Caco-2 (cell line): ENCODE measurements at regions of chr6 and their contacts with region 1.

Region 1: DNA sequence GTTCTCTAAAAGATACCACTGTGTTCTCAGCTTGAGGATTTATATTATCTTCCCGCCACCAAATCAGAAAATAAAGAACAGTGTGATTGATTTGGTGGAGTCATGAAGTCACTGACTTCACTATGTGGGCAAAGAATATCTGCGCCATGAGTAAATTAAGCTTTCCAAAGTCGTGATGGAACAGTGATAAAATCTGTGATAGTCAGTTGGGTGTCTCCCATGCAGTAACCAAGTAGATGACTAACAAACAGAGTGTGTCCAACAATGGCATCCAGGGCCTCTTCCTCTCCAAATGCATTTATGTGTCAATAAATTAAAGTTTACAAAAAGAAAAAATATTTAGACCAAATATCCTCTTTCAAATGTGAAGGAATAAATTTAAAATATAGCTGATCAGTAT is 87.0 kb upstream of the DST start:
- DNase-seq: no peak
- H3K4me3 ChIP-seq: no peak overlapping the region
- H3K4me3 Mint-ChIP-seq: no peak overlapping the region
- H3K27ac Mint-ChIP-seq: peak overlapping the region; percentile 46
- H3K4me1 ChIP-seq: peaks cover 74% of the 10 kb centered on the region
- H3K4me1 Mint-ChIP-seq: peaks cover 53% of the 10 kb centered on the region
- H3K27me3 ChIP-seq: no peaks in the 10 kb centered on the region
- H3K27me3 Mint-ChIP-seq: no peaks in the 10 kb centered on the region
- CTCF ChIP-seq: no peak

Region 2: DNA sequence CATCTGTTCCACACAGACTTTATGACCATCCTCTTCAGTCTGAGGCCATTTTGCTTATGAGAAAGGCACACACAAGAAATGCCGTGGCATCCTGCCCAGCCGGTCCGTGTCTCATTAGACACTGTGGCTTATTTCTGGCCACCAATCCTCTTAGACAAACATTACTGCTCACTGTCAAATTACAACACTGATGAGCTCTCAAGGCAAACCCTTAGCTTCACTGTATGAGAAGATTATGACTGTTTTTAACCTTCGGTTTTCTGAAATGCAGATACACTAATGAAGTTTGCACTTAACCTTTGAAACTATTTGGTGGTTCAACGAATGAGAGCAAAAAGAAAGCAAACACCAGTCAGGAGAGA is 36.5 kb before region 1 on chr6:
- CTCF ChIA-PET with region 1: no interaction called
- POLR2A ChIA-PET with region 1: no interaction called
- intact Hi-C with region 1: loop called (anchors 2 kb)
- DNase-seq: peak; percentile 22 to 50
- H3K4me3 ChIP-seq: peak overlapping the region; percentile 22
- H3K4me3 Mint-ChIP-seq: peak overlapping the region; percentile 58
- H3K27ac Mint-ChIP-seq: peak overlapping the region; percentile 56
- H3K4me1 ChIP-seq: peaks cover 43% of the 10 kb centered on the region
- H3K4me1 Mint-ChIP-seq: peaks cover 34% of the 10 kb centered on the region
- H3K27me3 ChIP-seq: no peaks in the 10 kb centered on the region
- H3K27me3 Mint-ChIP-seq: no peaks in the 10 kb centered on the region
- CTCF ChIP-seq: no peak

Region 3: GRCh38 chr6:56714982-56715456 is 14.7 kb before region 1 on chr6:
- CTCF ChIA-PET with region 1: interaction called, 4 read pairs
- POLR2A ChIA-PET with region 1: no interaction called
- intact Hi-C with region 1: loop called (anchors 1 kb)
- DNase-seq: no peak
- H3K4me3 ChIP-seq: no peak overlapping the region
- H3K4me3 Mint-ChIP-seq: no peak overlapping the region
- H3K27ac Mint-ChIP-seq: peak overlapping the region; percentile 58
- H3K4me1 ChIP-seq: peaks cover 52% of the 10 kb centered on the region
- H3K4me1 Mint-ChIP-seq: peaks cover 25% of the 10 kb centered on the region
- H3K27me3 ChIP-seq: no peaks in the 10 kb centered on the region
- H3K27me3 Mint-ChIP-seq: no peaks in the 10 kb centered on the region
- CTCF ChIP-seq: no peak

Region 4: GRCh38 chr6:56742122-56742791 is 12.5 kb after region 1 on chr6:
- CTCF ChIA-PET with region 1: no interaction called
- POLR2A ChIA-PET with region 1: no interaction called
- intact Hi-C with region 1: loop called (anchors 1 kb)
- DNase-seq: no peak
- H3K4me3 ChIP-seq: peak overlapping the region; percentile 7
- H3K4me3 Mint-ChIP-seq: peak overlapping the region; percentile 67
- H3K27ac Mint-ChIP-seq: peak overlapping the region; percentile 53
- H3K4me1 ChIP-seq: peaks cover 53% of the 10 kb centered on the region
- H3K4me1 Mint-ChIP-seq: peaks cover 45% of the 10 kb centered on the region
- H3K27me3 ChIP-seq: no peaks in the 10 kb centered on the region
- H3K27me3 Mint-ChIP-seq: no peaks in the 10 kb centered on the region
- CTCF ChIP-seq: no peak

Region 5: GRCh38 chr6:56764081-56764566 is 34.4 kb after region 1 on chr6:
- CTCF ChIA-PET with region 1: interaction called, 5 read pairs
- POLR2A ChIA-PET with region 1: no interaction called
- intact Hi-C with region 1: loop called (anchors 5 kb)
- DNase-seq: peak; percentile 60 to 68
- H3K4me3 ChIP-seq: no peak overlapping the region
- H3K4me3 Mint-ChIP-seq: peak overlapping the region; percentile 25
- H3K27ac Mint-ChIP-seq: peak overlapping the region; percentile 72
- H3K4me1 ChIP-seq: peaks cover 37% of the 10 kb centered on the region
- H3K4me1 Mint-ChIP-seq: peaks cover 16% of the 10 kb centered on the region
- H3K27me3 ChIP-seq: no peaks in the 10 kb centered on the region
- H3K27me3 Mint-ChIP-seq: no peaks in the 10 kb centered on the region
- CTCF ChIP-seq: peak; percentile 47 to 50